Posterior vena cava (tissue), 2 donors: ENCODE measurements at regions of chr12 and their contacts with region 1.

Region 1: DNA sequence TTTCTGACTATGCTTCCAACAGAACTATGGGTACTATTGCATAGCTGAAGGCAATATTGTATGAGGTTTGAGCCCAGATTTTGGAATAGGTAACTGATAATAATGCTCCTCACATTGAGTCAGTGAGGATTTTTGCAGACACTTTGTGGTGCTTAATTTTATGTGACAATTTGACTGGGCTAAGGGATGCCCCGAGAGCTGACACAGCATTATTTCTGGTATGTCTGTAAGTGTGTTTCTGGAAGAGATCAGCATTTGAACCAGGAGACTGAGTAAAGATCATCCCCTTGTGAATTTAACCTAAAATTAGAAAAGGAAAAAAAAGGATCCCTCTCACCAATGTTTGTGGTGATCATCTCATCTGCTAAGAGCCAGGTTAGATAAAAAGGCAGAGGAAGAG is 404.9 kb downstream of the AEBP2 start:
- DNase-seq: no peak

Region 2: DNA sequence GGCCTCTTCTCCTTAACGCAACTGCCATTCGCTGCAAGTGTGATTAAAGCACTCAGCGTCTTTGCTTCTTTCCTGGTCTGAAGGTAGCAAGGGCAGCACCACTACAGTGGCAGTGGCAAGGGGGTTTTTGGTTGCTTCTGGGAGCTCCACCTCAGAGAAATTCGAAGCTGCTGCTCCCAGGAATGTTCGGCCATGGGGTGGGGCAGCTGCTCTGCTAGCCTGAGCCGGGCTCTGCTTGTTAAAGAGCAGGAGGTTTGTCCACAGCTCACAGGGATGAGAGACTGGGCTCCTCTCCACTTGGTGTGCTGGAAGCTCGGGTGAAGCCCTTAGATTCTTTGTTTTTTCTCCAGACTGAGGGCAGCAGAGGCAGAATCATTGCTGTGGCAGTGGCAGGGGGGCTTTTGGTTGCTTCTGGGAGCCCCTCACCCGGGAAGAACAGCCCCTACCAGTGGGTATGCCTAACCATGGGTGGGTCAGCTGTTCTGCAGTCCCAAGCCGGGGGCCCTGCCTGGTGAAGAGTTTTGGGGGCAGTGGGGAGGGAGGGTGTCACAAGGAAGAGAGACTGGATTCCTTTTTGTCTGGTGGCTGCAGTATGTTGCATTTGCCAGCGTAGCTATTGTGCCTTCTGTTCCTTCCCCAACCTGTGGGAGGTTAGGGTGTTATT is 64.7 kb before region 1 on chr12:
- intact Hi-C with region 1: loop called in 1 of 2 experiments (anchors 2 kb)
- DNase-seq: peak; percentile 64

Region 3: DNA sequence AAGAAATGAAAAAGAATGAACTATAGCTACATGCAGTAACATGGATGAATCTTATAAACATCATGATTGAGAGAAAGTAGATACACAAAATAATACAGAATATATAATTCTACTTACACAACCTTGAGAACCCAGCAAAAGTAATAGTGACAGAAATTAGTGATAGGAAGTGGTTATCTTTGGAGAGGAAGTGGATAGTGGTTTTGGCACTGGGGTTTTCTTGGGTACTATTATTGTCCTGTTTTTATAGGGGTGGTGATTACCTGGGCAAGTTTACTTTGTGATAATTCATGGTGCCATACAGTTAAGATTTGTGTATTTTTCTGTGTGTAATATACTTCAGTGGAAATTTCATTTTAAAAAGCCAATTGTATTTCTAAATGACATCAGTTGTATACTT is 52.2 kb before region 1 on chr12:
- intact Hi-C with region 1: no loop called
- DNase-seq: no peak

Region 4: DNA sequence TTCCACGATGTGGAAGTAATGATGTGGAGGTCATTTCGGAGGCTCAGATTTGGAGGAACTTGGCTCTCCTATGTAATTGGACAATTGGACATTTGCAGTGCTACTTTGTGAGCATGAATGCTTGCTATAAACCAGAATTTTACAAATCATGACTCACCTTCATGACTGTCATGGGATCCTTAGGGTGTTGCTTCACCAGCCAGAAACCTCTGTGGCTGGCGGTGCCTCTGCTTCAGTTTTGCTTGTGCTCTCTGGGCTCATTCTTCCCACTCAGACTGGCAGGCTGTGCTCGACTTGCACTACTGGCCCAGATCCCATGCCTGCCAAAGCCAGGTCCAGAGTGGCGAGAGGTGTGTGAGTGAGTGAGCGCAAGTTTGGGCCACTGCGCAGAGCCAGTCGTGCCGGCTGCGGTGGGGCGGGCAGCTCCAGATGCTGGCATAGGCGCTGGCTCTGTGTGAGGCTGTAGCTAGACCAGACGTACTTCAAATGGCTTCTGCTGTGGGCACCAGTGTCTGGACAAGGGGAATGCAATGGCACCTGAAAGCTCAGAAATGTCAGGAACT is 17.2 kb before region 1 on chr12:
- intact Hi-C with region 1: no loop called
- DNase-seq: no peak

Region 5: DNA sequence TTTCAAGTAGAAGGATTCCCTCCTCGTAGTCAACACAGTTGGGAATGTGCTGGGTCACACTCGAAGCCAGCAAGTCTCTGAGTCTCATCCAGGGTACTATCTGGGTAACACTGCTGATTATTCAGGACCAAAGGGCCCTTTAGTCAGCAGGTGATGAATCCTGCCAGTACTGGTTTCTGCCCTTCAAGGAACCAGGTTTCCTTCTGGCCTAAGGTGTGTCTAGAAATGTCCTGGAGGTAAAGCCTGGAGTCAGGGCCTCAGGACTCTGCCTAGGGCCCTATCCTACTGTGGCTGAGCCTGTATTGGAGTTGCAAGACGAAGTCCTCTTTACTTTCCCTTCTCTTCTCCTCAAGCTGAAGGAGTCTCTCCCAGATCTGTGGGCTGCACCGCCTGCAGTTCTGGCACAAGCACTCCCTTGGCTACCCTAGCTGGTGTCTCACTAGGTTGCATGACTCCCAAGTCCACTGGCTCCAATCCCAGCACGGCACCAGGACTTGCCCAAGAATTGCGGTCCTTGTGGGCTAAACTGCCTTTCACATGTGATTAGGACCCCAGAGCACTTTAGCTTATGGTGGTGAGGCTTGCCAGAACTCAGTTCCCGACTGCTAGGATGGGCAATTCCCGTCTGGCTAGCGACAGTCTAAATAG is 330.4 kb after region 1 on chr12:
- intact Hi-C with region 1: no loop called
- DNase-seq: peak; percentile 65

Region 6: DNA sequence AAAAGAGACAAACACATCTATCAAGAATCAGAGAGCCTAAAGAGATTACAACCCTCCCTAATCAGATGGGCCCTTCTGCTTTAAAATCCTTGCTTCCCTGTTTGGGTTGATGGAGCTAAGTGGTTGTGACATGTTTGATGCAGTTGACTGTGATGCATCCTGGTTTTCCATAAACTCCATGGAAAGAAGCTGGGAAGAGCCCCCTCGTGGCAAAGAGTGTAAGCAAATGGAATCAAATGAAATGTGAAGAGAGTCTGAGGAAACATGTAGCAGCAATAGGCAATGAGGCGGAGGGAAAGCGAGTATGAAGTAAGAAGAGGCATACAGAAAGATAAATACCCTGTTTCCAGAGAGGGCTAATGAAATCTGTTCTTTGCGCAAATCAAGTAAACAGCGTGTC is 780.5 kb after region 1 on chr12:
- intact Hi-C with region 1: no loop called
- DNase-seq: no peak